ENCODE measurements at regions of chr13 and their contacts with region 1.

Region 1: DNA sequence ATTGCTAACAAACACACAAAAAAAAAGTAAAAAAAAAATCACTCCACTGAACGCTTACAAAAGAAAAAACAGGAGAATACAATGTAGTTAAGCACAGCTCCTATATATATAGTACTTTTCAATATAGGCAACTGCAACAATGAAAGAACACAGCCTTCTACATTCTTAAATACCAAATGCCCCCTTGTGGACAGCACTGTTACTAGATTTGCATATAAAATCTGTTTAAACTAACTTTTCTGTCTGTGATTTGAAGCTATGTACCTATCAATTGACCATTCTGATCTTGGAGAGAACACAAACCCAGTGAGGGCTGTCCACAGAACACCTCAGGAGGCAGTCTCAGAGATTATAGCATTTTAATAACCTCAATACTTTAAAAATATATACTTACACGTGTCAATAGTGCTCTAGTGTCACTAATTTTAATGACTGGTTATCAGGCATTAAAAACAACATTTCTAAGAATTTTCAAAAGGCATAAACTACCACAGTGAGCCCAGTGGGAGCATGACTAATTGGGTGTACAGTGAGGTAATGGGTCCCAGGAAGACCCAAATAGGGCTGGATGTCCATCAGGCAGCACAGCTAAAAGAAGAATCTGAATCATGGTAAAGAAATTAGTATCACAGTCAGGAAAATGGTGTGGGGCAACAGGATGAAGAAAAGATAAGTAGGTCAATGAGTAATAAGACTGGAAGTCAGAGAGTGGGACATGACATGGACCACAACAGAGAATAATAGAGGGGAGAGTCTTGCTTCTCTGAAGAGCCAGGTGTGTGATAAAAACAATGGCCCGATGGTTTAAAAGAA is 22.2 kb downstream of the CCDC169 start:
- DNase-seq: peak in 1 of 2 experiments; percentile 39
- H3K4me3 ChIP-seq: no peak overlapping the region
- H3K4me3 Mint-ChIP-seq: no peak overlapping the region
- H3K27ac Mint-ChIP-seq: no peak overlapping the region
- H3K4me1 ChIP-seq: no peaks in the 10 kb centered on the region
- H3K4me1 Mint-ChIP-seq: no peaks in the 10 kb centered on the region
- H3K27me3 ChIP-seq: no peaks in the 10 kb centered on the region
- H3K27me3 Mint-ChIP-seq: peaks cover 3% of the 10 kb centered on the region
- CTCF ChIP-seq: peak; percentile 41 to 60

Region 2: GRCh38 chr13:35978603-35979316 is 296.6 kb before region 1 on chr13:
- CTCF ChIA-PET with region 1: interaction called, 7 read pairs
- POLR2A ChIA-PET with region 1: no interaction called
- intact Hi-C with region 1: loop called (anchors 1 kb)
- DNase-seq: peak in 1 of 2 experiments; percentile 51
- H3K4me3 ChIP-seq: no peak overlapping the region
- H3K4me3 Mint-ChIP-seq: no peak overlapping the region
- H3K27ac Mint-ChIP-seq: no peak overlapping the region
- H3K4me1 ChIP-seq: no peaks in the 10 kb centered on the region
- H3K4me1 Mint-ChIP-seq: no peaks in the 10 kb centered on the region
- H3K27me3 ChIP-seq: no peaks in the 10 kb centered on the region
- H3K27me3 Mint-ChIP-seq: peaks cover 3% of the 10 kb centered on the region
- CTCF ChIP-seq: peak; percentile 54 to 84

Region 3: GRCh38 chr13:36190771-36191170 is 84.6 kb before region 1 on chr13:
- CTCF ChIA-PET with region 1: no interaction called
- POLR2A ChIA-PET with region 1: no interaction called
- intact Hi-C with region 1: loop called (anchors 1 kb)
- DNase-seq: no peak
- H3K4me3 ChIP-seq: no peak overlapping the region
- H3K4me3 Mint-ChIP-seq: no peak overlapping the region
- H3K27ac Mint-ChIP-seq: no peak overlapping the region
- H3K4me1 ChIP-seq: no peaks in the 10 kb centered on the region
- H3K4me1 Mint-ChIP-seq: no peaks in the 10 kb centered on the region
- H3K27me3 ChIP-seq: no peaks in the 10 kb centered on the region
- H3K27me3 Mint-ChIP-seq: peaks cover 9% of the 10 kb centered on the region
- CTCF ChIP-seq: no peak

Measured in Caco-2 (cell line).